CD4-positive, alpha-beta T cell (primary cell): ENCODE measurements at regions of chr6 and their contacts with region 1.

Region 1: GRCh38 chr6:135183532-135184440 is 2.7 kb downstream of the MYB start:
- DNase-seq: peak; percentile 59 to 89 (median 76)
- ATAC-seq: peak; percentile 57
- H3K4me3 ChIP-seq: peak overlapping the region; percentile 71
- H3K4me3 Mint-ChIP-seq: peak overlapping the region; percentile 94
- H3K27ac ChIP-seq: peak overlapping the region in 1 of 2 donors; percentile 24
- H3K27ac Mint-ChIP-seq: peak overlapping the region; percentile 57
- H3K4me1 ChIP-seq: peaks cover 26% of the 10 kb centered on the region
- H3K4me1 Mint-ChIP-seq: peaks cover 36% of the 10 kb centered on the region
- H3K27me3 ChIP-seq: no peaks in the 10 kb centered on the region
- H3K27me3 Mint-ChIP-seq: no peaks in the 10 kb centered on the region
- CTCF ChIP-seq: peak; percentile 67

Region 2: GRCh38 chr6:135014353-135014832 is 169.4 kb before region 1 on chr6:
- CTCF ChIA-PET with region 1: interaction called, 3 read pairs
- POLR2A ChIA-PET with region 1: no interaction called
- intact Hi-C with region 1: loop called in 1 of 2 experiments (anchors 5 kb)
- DNase-seq: peak in 4 of 14 experiments; percentile 24 to 67 (median 54)
- ATAC-seq: peak; percentile 87
- H3K4me3 ChIP-seq: peak overlapping the region; percentile 29
- H3K4me3 Mint-ChIP-seq: peak overlapping the region; percentile 66
- H3K27ac ChIP-seq: peak overlapping the region; percentile 56 to 69
- H3K27ac Mint-ChIP-seq: peak overlapping the region; percentile 78
- H3K4me1 ChIP-seq: peaks cover 20% of the 10 kb centered on the region
- H3K4me1 Mint-ChIP-seq: peaks cover 64% of the 10 kb centered on the region
- H3K27me3 ChIP-seq: no peaks in the 10 kb centered on the region
- H3K27me3 Mint-ChIP-seq: no peaks in the 10 kb centered on the region
- CTCF ChIP-seq: no peak

Region 3: GRCh38 chr6:135088818-135089809 is 94.7 kb before region 1 on chr6:
- CTCF ChIA-PET with region 1: interaction called, 20 read pairs
- POLR2A ChIA-PET with region 1: interaction called, 21 read pairs
- intact Hi-C with region 1: loop called (anchors 2 to 5 kb)
- DNase-seq: peak in 4 of 14 experiments; percentile 50 to 72 (median 64)
- ATAC-seq: peak; percentile 60
- H3K4me3 ChIP-seq: peak overlapping the region; percentile 38
- H3K4me3 Mint-ChIP-seq: peak overlapping the region; percentile 78
- H3K27ac ChIP-seq: peak overlapping the region in 1 of 2 donors; percentile 14
- H3K27ac Mint-ChIP-seq: peak overlapping the region; percentile 94
- H3K4me1 ChIP-seq: peaks cover 44% of the 10 kb centered on the region
- H3K4me1 Mint-ChIP-seq: peaks cover 86% of the 10 kb centered on the region
- H3K27me3 ChIP-seq: no peaks in the 10 kb centered on the region
- H3K27me3 Mint-ChIP-seq: no peaks in the 10 kb centered on the region
- CTCF ChIP-seq: peak; percentile 62

Region 4: GRCh38 chr6:135145063-135145800 is 38.6 kb before region 1 on chr6:
- CTCF ChIA-PET with region 1: interaction called, 23 read pairs
- POLR2A ChIA-PET with region 1: interaction called, 7 read pairs
- intact Hi-C with region 1: loop called (anchors 1 to 2 kb)
- DNase-seq: peak in 4 of 14 experiments; percentile 39 to 65 (median 61)
- ATAC-seq: peak; percentile 74
- H3K4me3 ChIP-seq: peak overlapping the region; percentile 15
- H3K4me3 Mint-ChIP-seq: peak overlapping the region; percentile 3
- H3K27ac ChIP-seq: no peak overlapping the region
- H3K27ac Mint-ChIP-seq: peak overlapping the region; percentile 6
- H3K4me1 ChIP-seq: no peaks in the 10 kb centered on the region
- H3K4me1 Mint-ChIP-seq: peaks cover 51% of the 10 kb centered on the region
- H3K27me3 ChIP-seq: no peaks in the 10 kb centered on the region
- H3K27me3 Mint-ChIP-seq: no peaks in the 10 kb centered on the region
- CTCF ChIP-seq: peak; percentile 83

Region 5: GRCh38 chr6:135257631-135258405 is 74.0 kb after region 1 on chr6:
- CTCF ChIA-PET with region 1: no interaction called
- POLR2A ChIA-PET with region 1: no interaction called
- intact Hi-C with region 1: no loop called
- DNase-seq: peak in 2 of 14 experiments; percentile 4 to 9
- ATAC-seq: no peak
- H3K4me3 ChIP-seq: no peak overlapping the region
- H3K4me3 Mint-ChIP-seq: no peak overlapping the region
- H3K27ac ChIP-seq: no peak overlapping the region
- H3K27ac Mint-ChIP-seq: no peak overlapping the region
- H3K4me1 ChIP-seq: no peaks in the 10 kb centered on the region
- H3K4me1 Mint-ChIP-seq: no peaks in the 10 kb centered on the region
- H3K27me3 ChIP-seq: no peaks in the 10 kb centered on the region
- H3K27me3 Mint-ChIP-seq: no peaks in the 10 kb centered on the region
- CTCF ChIP-seq: no peak

Region 6: GRCh38 chr6:135423649-135424128 is 239.9 kb after region 1 on chr6:
- CTCF ChIA-PET with region 1: no interaction called
- POLR2A ChIA-PET with region 1: no interaction called
- intact Hi-C with region 1: loop called in 1 of 2 experiments (anchors 5 kb)
- DNase-seq: peak in 4 of 14 experiments; percentile 3 to 54 (median 48)
- ATAC-seq: peak; percentile 48
- H3K4me3 ChIP-seq: no peak overlapping the region
- H3K4me3 Mint-ChIP-seq: no peak overlapping the region
- H3K27ac ChIP-seq: no peak overlapping the region
- H3K27ac Mint-ChIP-seq: no peak overlapping the region
- H3K4me1 ChIP-seq: no peaks in the 10 kb centered on the region
- H3K4me1 Mint-ChIP-seq: no peaks in the 10 kb centered on the region
- H3K27me3 ChIP-seq: no peaks in the 10 kb centered on the region
- H3K27me3 Mint-ChIP-seq: no peaks in the 10 kb centered on the region
- CTCF ChIP-seq: peak; percentile 74